Heart right ventricle (tissue), 16 donors: ENCODE measurements at regions of chr2 and their contacts with region 1.

Region 1: GRCh38 chr2:101252408-101253012 is at the start of gene CNOT11:
- DNase-seq: peak; percentile 100
- ATAC-seq: peak; percentile 94 to 97 (median 96)
- H3K4me3 ChIP-seq: peak within 1 kb of the TSS; percentile 71 to 100 (median 95)
- H3K27ac ChIP-seq: peak within 1 kb of the TSS; percentile 67 to 99 (median 97)
- H3K4me1 ChIP-seq: peaks cover 2 to 42% (median 38%) of the 10 kb centered on the region in 9 donors
- H3K27me3 ChIP-seq: no peaks in the 10 kb centered on the region
- CTCF ChIP-seq: no peak
- total RNA-seq, gene CNOT11: 37.8 to 77.1 (median 45.8) TPM

Region 2: DNA sequence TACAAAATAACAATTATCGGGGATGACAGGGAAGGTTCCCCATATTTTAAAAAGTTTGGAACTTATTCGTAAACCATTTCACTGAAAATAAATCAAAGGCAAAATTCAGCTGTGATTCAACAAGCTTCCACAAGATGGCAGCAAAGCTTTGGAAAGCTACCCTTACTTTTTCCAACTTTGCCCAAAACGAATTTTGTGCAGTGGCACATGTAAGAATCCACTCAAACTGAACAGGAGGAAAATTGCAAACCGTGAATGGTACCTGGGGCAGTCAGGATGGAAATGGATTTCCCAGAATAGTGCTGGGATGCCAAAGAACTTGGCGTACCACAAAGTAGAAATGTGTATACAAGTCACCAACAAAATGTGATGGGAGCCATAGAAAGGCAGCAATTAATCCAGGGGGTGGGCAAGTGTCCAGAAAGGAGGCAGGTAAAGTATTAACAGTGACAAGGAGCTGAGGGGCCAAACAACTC is 239.8 kb before region 1 on chr2:
- intact Hi-C with region 1: loop called in 1 of 10 experiments (anchors 5 kb)
- DNase-seq: peak in 1 of 2 donors; percentile 26
- ATAC-seq: no peak
- H3K4me3 ChIP-seq: no peak overlapping the region
- H3K27ac ChIP-seq: no peak overlapping the region
- H3K4me1 ChIP-seq: peaks cover 0 to 8% (median 0%) of the 10 kb centered on the region in 9 donors
- H3K27me3 ChIP-seq: no peaks in the 10 kb centered on the region
- CTCF ChIP-seq: peak; percentile 73 to 91 (median 81)

Region 3: GRCh38 chr2:101094351-101094750 is 158.2 kb before region 1 on chr2:
- intact Hi-C with region 1: no loop called
- DNase-seq: no peak
- ATAC-seq: no peak
- H3K4me3 ChIP-seq: no peak overlapping the region
- H3K27ac ChIP-seq: peak overlapping the region in 1 of 10 donors; percentile 9
- H3K4me1 ChIP-seq: peaks cover 0 to 18% (median 12%) of the 10 kb centered on the region in 9 donors
- H3K27me3 ChIP-seq: no peaks in the 10 kb centered on the region
- CTCF ChIP-seq: no peak

Region 4: GRCh38 chr2:101308432-101309210 is 56.1 kb after region 1 on chr2 and contains the start of gene RNF149:
- intact Hi-C with region 1: loop called in 1 of 10 experiments (anchors 10 kb)
- DNase-seq: peak; percentile 92 to 96
- ATAC-seq: peak; percentile 94 to 96 (median 95)
- H3K4me3 ChIP-seq: peak within 1 kb of the TSS; percentile 70 to 99 (median 86)
- H3K27ac ChIP-seq: peak within 1 kb of the TSS; percentile 57 to 99 (median 91)
- H3K4me1 ChIP-seq: peaks cover 4 to 71% (median 41%) of the 10 kb centered on the region in 9 donors
- H3K27me3 ChIP-seq: no peaks in the 10 kb centered on the region
- CTCF ChIP-seq: peak in 3 of 9 donors; percentile 2 to 8 (median 6)
- total RNA-seq, gene RNF149: 11.0 to 25.5 (median 12.5) TPM

Region 5: DNA sequence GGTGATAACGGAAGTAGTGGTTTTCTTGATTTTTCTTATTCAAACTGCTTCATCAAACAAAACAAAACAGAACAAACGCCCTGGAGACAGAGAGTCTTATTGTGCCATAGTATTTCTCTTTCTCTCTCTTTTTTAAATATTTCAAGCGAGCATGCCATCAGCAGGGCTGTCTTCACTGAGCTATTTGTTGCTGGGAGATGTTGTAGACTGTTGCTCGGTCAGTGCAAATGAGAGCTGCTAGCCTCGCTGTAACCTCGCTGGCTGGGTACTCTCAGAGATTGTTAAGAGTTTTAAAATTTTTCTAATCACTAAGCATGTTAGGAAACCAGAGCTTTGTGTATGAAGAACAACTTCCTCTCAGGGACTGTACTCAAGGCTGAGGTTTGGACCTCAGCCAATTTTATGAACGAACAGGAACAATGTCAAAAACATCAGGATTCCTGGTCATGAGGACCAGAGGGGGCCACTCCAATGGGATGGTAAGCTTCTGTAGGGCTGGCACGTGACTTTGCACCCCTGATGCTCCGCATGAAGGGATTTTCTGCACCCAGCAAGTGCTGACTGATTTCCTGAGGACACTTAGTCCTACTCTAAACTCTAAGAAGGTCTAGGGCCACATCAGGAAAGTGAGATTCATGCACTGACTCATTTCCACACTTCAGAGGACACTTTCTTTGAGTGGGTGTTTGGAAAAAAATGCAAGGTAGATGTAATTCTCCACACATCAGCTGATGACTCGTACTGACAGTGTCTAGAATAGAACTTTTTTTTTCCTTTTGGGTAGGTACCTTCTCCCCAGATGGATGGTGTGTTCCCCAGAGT is 830.3 kb after region 1 on chr2:
- intact Hi-C with region 1: no loop called
- DNase-seq: peak in 1 of 2 donors; percentile 47
- ATAC-seq: peak; percentile 74 to 94 (median 87)
- H3K4me3 ChIP-seq: peak overlapping the region in 6 of 10 donors; percentile 3 to 21 (median 5)
- H3K27ac ChIP-seq: peak overlapping the region in 9 of 10 donors; percentile 9 to 81 (median 63)
- H3K4me1 ChIP-seq: peaks cover 0 to 30% (median 16%) of the 10 kb centered on the region in 9 donors
- H3K27me3 ChIP-seq: no peaks in the 10 kb centered on the region
- CTCF ChIP-seq: no peak